IMR-90 (cell line): ENCODE measurements at regions of chr2 and their contacts with region 1.

Region 1: DNA sequence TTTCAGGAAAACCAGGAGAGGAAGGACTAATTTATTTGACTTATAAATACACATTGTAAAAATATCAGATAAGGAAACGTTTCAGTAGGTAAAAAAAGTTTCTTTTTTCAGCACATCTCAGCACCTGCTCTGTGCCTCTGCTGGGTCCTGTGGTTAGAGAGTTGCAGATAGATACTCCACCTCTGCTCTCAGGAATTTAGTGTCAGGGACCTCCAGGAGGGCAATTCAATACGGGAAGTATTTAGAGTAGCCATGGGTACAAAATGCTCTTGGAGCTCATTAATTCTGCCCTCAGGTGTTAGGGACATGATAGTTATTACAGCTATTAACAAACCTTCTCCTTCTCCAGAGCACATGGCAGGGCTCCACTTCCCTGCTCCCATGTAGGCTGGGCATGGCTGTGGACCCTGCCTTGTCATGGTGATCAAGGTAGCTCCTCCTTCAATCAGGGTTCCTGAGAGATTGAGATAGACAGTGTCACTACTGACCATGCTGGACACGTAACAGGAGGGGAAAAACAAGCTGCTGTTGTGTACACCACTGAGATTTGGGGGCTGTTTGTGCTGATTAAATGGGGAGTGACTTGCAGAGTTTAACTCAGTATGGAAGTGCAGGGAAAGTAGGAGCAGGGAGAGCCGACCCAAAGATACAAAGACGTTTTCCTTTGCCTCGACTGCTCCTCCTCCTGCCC is 185.6 kb upstream of the COPS8 start:
- DNase-seq: no peak
- ATAC-seq: no peak
- H3K4me3 ChIP-seq: no peak overlapping the region
- H3K27ac ChIP-seq: no peak overlapping the region
- H3K4me1 ChIP-seq: no peaks in the 10 kb centered on the region
- H3K27me3 ChIP-seq: peaks cover 21% of the 10 kb centered on the region
- CTCF ChIP-seq: no peak
- POLR2A ChIP-seq: no peak
- RAD21 ChIP-seq: no peak

Region 2: DNA sequence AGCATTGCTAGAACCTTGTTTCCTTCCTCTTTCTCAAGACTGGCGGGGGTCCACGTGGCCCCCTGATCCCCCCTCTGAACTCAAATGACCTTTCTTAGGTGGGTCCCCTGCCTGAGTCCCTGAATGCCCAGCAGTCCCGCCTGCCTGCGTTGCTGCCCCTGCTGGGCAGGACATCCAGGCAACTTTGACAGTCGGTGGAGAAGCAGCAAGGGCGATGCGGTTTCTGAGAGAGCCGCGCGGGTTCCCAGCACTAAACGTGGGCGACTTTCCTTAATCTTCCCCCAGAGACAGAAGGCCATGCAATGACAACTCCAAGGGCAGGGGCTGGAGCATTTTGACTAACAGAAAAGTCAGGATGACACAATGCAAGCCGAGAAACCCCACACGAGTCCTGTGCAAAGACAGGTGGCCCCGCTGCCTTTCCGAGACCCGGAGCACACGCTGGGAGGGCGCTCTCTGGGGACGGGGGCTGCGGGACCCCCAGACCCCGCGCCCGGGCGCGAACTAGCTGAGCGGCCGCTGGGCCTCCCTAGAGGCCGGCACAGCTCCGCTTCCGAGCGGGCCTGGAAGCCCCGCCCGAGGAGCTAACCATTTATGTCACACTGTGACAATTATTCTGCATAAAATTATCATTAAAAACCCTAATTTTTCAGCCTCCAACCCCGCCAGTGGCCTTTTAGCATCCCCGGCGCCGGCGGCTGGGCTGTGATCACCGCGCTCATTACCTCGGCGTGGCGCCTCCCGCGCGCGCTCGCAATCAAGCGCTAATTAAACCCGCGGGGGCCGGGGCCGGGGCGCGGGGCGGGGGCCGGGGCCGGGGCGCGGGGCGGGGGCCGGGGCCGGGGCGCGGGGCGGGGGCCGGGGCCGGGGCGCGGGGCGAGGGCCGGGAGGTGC is 663.3 kb before region 1 on chr2:
- CTCF ChIA-PET with region 1: no interaction called
- POLR2A ChIA-PET with region 1: no interaction called
- dilution Hi-C with region 1: no loop called
- in situ Hi-C with region 1: no loop called
- intact Hi-C with region 1: loop called (anchors 5 kb)
- DNase-seq: no peak
- ATAC-seq: 0 out of 2 replicates have a peak, but pooled peaks have one; percentile 27
- H3K4me3 ChIP-seq: no peak overlapping the region
- H3K27ac ChIP-seq: no peak overlapping the region
- H3K4me1 ChIP-seq: peaks cover 10% of the 10 kb centered on the region
- H3K27me3 ChIP-seq: peaks cover 37% of the 10 kb centered on the region
- CTCF ChIP-seq: no peak
- POLR2A ChIP-seq: no peak
- RAD21 ChIP-seq: no peak

Region 3: GRCh38 chr2:236883819-236884218 is 16.3 kb before region 1 on chr2:
- CTCF ChIA-PET with region 1: no interaction called
- POLR2A ChIA-PET with region 1: no interaction called
- dilution Hi-C with region 1: no loop called
- in situ Hi-C with region 1: no loop called
- intact Hi-C with region 1: no loop called
- DNase-seq: no peak
- ATAC-seq: no peak
- H3K4me3 ChIP-seq: no peak overlapping the region
- H3K27ac ChIP-seq: no peak overlapping the region
- H3K4me1 ChIP-seq: peaks cover 8% of the 10 kb centered on the region; the same call in 1 of the 2 replicates
- H3K27me3 ChIP-seq: no peaks in the 10 kb centered on the region; the same call in none of the 2 replicates
- CTCF ChIP-seq: no peak
- POLR2A ChIP-seq: no peak
- RAD21 ChIP-seq: no peak